Transverse colon (tissue), 4 donors: ENCODE measurements at regions of chr3 and their contacts with region 1.

Region 1: DNA sequence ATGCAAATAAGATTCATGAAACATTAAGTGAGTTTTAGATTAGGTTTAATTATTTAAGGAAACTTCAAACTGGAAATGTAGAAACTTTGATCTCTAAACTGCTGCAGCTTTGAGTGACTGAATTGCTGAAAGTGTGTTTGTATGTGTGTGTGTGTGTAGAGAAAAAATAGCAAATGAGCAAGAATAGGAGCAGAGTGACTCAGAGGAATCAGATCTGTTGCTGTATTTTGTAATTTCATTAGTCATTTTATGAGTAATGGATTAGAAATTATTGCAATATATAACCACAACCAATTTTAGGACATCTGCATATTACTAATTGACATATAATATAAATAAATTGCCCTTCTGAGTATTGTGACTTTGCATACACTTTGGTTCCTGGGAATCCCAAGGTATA is 52.8 kb upstream of the SLC9A9 start:
- DNase-seq: no peak
- H3K4me3 ChIP-seq: no peak overlapping the region
- H3K27ac ChIP-seq: no peak overlapping the region
- H3K4me1 ChIP-seq: peaks cover 0 to 6% (median 0%) of the 10 kb centered on the region in 4 donors
- H3K27me3 ChIP-seq: no peaks in the 10 kb centered on the region
- CTCF ChIP-seq: no peak
- EP300 ChIP-seq: no peak
- POLR2A ChIP-seq: no peak

Region 2: GRCh38 chr3:143814443-143814889 is 86.6 kb before region 1 on chr3:
- in situ Hi-C with region 1: no loop called
- intact Hi-C with region 1: no loop called
- DNase-seq: no peak
- H3K4me3 ChIP-seq: no peak overlapping the region
- H3K27ac ChIP-seq: no peak overlapping the region
- H3K4me1 ChIP-seq: peaks cover 0 to 20% (median 5%) of the 10 kb centered on the region in 4 donors
- H3K27me3 ChIP-seq: no peaks in the 10 kb centered on the region
- CTCF ChIP-seq: no peak
- EP300 ChIP-seq: no peak
- POLR2A ChIP-seq: no peak

Region 3: GRCh38 chr3:143847787-143848631 is 53.1 kb before region 1 on chr3 and contains the start of gene SLC9A9:
- in situ Hi-C with region 1: no loop called
- intact Hi-C with region 1: no loop called
- DNase-seq: peak; percentile 23
- H3K4me3 ChIP-seq: peak within 1 kb of the TSS; percentile 42 to 48 (median 46)
- H3K27ac ChIP-seq: peak within 1 kb of the TSS; percentile 60 to 73 (median 68)
- H3K4me1 ChIP-seq: peaks cover 0 to 26% (median 0%) of the 10 kb centered on the region in 4 donors
- H3K27me3 ChIP-seq: no peaks in the 10 kb centered on the region
- CTCF ChIP-seq: no peak
- EP300 ChIP-seq: no peak
- POLR2A ChIP-seq: no peak
- total RNA-seq, gene SLC9A9: 1.1 to 15.9 (median 9.7) TPM

Region 4: DNA sequence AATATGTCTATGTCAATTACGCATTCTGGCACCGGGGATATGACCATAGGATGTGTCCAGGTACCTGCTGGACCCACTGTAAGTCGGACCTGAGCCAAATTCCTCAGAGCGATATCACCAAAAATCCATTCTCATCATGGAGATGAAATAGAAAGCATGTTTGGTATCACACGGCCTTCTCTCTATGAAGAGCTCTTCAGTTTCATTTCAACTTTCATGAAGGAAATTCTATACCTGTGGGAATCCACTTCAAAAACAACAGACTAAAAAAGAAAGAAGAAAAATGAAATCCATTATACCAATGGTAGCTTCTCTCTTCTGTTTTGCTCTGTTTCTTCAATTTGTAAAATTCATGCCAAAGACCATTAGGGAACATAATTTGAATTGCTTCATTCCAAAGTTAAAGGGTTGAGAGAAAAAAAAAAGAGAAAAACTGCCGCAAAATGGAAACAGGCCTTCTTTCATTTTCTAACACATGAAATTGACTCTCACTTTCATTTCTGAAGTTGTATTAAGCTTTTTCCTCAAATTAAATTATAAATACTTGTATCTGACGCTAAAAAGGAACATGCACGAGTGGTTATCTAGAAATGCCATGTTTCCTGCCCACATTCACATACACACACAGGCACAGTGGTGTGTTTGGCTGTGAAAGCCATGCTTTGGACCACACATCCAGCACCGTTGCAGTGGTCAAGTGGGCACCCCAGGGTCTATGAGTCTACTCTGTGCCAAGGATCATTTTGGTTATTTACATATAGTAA is 23.6 kb after region 1 on chr3:
- in situ Hi-C with region 1: no loop called
- intact Hi-C with region 1: loop called (anchors 1 kb)
- DNase-seq: no peak
- H3K4me3 ChIP-seq: no peak overlapping the region
- H3K27ac ChIP-seq: no peak overlapping the region
- H3K4me1 ChIP-seq: no peaks in the 10 kb centered on the region
- H3K27me3 ChIP-seq: no peaks in the 10 kb centered on the region
- CTCF ChIP-seq: no peak
- EP300 ChIP-seq: no peak
- POLR2A ChIP-seq: no peak

Region 5: GRCh38 chr3:144109944-144110343 is 208.8 kb after region 1 on chr3:
- in situ Hi-C with region 1: no loop called
- intact Hi-C with region 1: no loop called
- DNase-seq: no peak
- H3K4me3 ChIP-seq: no peak overlapping the region
- H3K27ac ChIP-seq: no peak overlapping the region
- H3K4me1 ChIP-seq: no peaks in the 10 kb centered on the region
- H3K27me3 ChIP-seq: no peaks in the 10 kb centered on the region
- CTCF ChIP-seq: no peak
- EP300 ChIP-seq: no peak
- POLR2A ChIP-seq: no peak

Region 6: DNA sequence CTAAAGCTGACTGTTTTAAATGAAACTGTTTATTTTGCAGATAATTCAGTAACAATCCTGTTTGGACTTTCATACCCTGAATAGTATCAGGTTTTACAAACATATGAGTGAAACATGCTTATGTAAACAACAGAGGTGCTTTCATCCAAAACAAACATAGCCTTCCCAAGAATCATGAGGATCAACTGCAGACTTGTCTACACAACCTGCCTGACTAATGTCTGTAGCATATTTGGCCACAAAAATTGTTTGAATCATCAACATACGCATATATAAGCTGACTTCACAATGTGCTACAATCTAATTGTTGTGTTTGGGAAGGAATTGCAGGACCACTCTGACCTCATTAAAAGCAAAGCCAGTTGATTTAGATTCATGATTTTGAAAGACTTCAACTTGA is 261.0 kb after region 1 on chr3:
- in situ Hi-C with region 1: no loop called
- intact Hi-C with region 1: no loop called
- DNase-seq: no peak
- H3K4me3 ChIP-seq: no peak overlapping the region
- H3K27ac ChIP-seq: no peak overlapping the region
- H3K4me1 ChIP-seq: no peaks in the 10 kb centered on the region
- H3K27me3 ChIP-seq: no peaks in the 10 kb centered on the region
- CTCF ChIP-seq: no peak
- EP300 ChIP-seq: no peak
- POLR2A ChIP-seq: no peak